GM10248 (cell line): ENCODE measurements at regions of chr3 and their contacts with region 1.

Region 1: DNA sequence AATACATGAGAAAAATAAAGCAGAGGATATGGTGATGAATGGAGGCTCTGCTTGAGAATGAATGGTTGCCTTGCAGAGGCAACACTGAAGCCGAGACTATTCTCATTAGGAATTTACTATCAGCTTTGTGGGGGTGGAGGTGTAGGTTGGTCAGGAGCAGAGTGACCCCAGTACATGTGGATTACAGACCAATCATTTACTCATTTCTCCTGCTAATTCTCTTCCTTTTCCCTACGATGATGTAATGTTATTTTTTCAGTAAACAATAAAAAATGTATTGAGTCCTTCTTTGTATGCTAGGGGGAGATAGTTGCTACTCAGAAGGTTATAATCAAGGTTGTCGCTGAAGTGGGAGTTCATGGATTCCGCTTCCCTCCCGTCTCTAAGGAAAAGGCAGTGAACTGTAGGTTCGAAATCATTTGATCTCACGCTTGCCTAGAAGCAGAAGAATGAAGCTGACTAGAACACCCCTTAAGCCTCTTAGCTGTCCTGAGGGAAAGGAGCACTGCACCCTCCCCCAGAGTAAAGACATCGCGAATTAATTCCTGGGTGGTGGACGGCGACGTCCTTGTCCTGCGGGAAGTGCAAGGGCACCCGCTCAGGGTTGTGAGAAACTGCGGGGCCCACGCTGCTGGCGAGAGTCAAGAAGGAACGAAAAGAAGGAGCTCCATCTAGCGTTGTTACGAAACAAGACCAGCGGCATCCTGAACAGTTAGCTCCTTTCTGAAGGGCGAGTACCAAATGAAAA is 213.2 kb upstream of the PFN2 start:
- DNase-seq: peak; percentile 68
- CTCF ChIP-seq: peak; percentile 74

Region 2: GRCh38 chr3:149936812-149937233 is 247.0 kb before region 1 on chr3:
- CTCF ChIA-PET with region 1: interaction called, 14 read pairs
- POLR2A ChIA-PET with region 1: no interaction called
- DNase-seq: peak; percentile 40
- CTCF ChIP-seq: peak; percentile 58

Region 3: GRCh38 chr3:149958171-149958796 is 225.6 kb before region 1 on chr3:
- CTCF ChIA-PET with region 1: interaction called, 16 read pairs
- POLR2A ChIA-PET with region 1: no interaction called
- DNase-seq: no peak
- CTCF ChIP-seq: no peak

Region 4: DNA sequence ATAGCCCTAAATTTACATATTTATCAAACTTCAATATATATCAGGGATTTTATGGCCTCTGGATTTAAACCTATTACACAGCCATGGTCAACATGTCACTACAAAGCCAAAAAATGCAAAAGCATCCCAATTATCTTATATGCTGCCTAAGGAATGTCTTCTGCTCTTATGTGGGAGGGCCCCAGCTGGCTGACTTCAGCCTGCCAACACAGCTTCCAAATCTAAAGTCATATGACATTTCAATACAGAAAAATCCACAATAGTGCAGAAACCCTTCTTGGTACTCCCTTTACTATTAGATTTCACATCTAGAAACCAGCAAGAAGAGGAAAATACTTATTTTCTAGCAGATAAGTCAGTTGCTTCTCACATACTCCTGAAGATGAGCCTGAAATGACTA is 219.6 kb before region 1 on chr3:
- CTCF ChIA-PET with region 1: interaction called, 54 read pairs
- POLR2A ChIA-PET with region 1: no interaction called
- DNase-seq: no peak
- CTCF ChIP-seq: no peak

Region 5: DNA sequence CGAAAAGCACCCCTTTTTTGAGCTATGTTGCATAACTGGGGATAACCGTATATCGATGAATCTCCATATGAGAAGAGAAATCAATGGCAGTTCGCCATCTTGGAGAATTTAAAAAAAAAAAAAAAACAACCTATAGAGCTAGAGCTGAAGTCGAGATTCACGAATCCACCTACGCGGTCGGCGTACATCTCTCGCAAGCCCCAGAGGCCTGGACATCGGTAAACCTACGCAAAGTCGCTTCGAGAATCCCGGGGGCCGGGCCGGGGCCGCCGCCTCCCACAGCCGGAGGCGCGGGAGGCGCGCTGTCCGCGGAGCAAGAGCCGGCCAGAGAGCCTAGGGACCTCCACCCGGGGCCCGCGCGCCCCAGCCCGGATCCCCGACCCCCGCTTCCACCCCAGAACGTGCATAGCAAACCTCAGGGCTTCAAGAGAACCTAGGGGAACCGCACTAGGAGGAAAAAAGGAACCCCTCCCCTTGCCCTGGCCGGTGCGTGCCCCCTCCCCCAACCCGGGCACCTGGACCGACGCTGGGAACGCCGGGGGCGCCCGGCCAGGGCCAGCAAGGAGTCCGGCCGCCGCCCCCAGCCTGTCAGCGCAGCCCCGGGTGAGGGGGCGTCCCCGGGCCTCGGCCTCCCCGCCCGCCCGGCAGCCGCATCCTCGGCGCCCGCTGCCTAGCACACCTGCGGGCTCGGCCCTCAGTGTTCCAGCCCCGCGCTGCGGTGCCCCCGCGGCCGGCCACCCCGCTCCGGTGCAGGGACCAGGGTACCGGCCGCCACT is 213.7 kb before region 1 on chr3:
- CTCF ChIA-PET with region 1: interaction called, 54 read pairs
- POLR2A ChIA-PET with region 1: no interaction called
- DNase-seq: peak; percentile 73
- CTCF ChIP-seq: no peak

Region 6: DNA sequence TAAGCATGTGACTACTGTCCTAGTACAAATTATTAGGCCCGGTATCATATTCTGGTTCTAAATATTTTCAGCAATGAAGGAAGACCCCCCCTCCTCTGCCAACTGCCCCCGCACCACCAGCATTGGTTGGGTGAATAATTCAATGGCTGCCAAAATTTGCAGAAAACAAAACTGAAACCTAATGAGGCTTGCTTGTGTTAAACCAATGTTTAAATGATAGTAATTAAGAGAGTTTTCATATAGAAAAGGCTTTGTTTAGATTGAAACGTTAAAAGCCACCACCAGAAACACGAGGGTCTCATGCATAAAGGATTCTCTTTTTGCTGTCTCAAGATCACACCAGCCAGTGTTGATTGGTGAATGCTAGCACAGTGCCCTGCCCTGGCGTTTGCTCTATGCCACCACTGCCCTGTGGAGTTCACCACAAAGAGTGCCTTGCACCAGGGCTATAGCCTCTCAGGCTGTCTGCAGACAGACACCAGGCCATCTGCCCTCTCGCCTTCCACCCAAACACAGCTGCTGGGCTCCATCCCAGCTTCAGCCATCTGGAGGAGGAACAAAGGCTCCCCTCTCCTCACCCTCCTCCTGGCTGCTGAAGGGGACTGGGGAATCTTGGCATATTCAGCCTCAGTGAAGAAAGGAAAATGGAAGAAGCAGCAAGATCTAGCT is 12.9 kb before region 1 on chr3:
- CTCF ChIA-PET with region 1: interaction called, 27 read pairs
- POLR2A ChIA-PET with region 1: no interaction called
- DNase-seq: no peak
- CTCF ChIP-seq: no peak

Region 7: DNA sequence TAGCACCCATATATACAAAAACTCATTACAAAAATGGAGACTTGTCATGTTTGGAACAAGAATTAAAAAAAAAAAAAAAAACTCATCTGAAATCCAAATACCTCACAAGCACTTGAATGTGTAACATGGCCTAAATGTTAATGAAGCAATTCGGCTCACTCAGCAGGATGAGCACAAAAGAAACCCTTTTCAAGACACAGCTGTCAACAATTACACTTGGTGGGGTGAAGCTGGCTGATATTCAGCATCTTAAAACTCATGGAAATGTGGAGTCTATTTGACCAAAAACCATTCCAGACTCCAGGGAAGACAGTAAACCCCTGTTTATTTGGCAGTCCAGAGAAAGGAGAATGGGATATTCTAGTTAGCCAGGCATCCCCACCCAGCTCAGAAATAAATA is 18.9 kb after region 1 on chr3:
- CTCF ChIA-PET with region 1: interaction called, 12 read pairs
- POLR2A ChIA-PET with region 1: no interaction called
- DNase-seq: no peak
- CTCF ChIP-seq: no peak